Activated CD8-positive, alpha-beta T cell treated with anti-CD3 and anti-CD28 coated beads, Interleukin-2, amount 10 ng/mL, durations not matched to agents 7 days and 5 days (primary cell): ENCODE measurements at regions of chr7 and their contacts with region 1.

Region 1: GRCh38 chr7:56074371-56074791 is 10.3 kb downstream of the SUMF2 start:
- DNase-seq: peak; percentile 70
- ATAC-seq: peak; percentile 90
- H3K4me3 Mint-ChIP-seq: no peak overlapping the region
- H3K27ac Mint-ChIP-seq: peak overlapping the region; percentile 50
- H3K4me1 Mint-ChIP-seq: peaks cover 5% of the 10 kb centered on the region
- H3K27me3 Mint-ChIP-seq: no peaks in the 10 kb centered on the region

Region 2: DNA sequence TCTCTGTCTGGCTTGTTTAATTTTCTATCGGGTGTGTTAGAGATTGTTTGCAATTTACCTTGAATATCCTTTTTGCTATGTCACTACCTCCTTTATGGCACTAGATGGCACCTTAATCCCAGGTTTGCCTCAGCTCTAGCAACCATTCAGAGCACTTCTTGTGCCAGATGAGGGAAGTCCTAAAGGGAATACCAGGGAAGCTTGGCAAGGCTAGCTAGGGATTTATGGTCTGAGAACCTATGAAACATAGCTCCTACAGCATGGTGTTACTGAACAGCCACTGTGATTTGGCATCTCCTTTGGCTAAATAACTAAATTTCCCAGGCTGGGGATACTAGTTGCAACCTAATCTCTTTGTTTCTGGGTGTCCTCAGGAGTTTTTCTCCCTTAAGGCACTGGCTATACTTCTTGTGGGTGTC is 433.1 kb before region 1 on chr7:
- CTCF ChIA-PET with region 1: interaction called, 17 read pairs
- POLR2A ChIA-PET with region 1: no interaction called
- DNase-seq: peak; percentile 61
- ATAC-seq: peak; percentile 91
- H3K4me3 Mint-ChIP-seq: no peak overlapping the region
- H3K27ac Mint-ChIP-seq: peak overlapping the region; percentile 62
- H3K4me1 Mint-ChIP-seq: peaks cover 11% of the 10 kb centered on the region
- H3K27me3 Mint-ChIP-seq: peaks cover 2% of the 10 kb centered on the region

Region 3: DNA sequence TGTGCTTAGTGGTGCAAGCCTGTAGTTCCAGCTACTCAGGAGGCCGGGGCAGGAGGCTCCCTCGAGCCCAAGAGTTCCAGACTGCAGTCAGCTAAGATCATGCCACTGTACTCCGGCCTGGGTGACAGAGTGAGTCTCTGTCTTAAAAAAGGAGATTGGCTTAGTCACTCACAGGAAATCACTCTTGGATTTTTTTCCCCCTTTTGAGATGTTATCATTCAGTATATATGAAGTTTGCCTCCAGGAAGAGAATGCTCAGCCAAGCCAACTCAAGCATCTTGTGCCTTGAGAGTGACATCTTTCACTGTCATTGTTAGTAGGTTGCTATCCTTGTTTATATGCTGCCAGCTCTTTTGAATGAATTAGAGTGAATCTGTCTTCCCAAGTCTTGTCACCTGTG is 82.0 kb before region 1 on chr7:
- CTCF ChIA-PET with region 1: interaction called, 10 read pairs
- POLR2A ChIA-PET with region 1: no interaction called
- DNase-seq: no peak
- ATAC-seq: no peak
- H3K4me3 Mint-ChIP-seq: no peak overlapping the region
- H3K27ac Mint-ChIP-seq: no peak overlapping the region
- H3K4me1 Mint-ChIP-seq: no peaks in the 10 kb centered on the region
- H3K27me3 Mint-ChIP-seq: no peaks in the 10 kb centered on the region

Region 4: GRCh38 chr7:56003749-56004148 is 70.6 kb before region 1 on chr7:
- CTCF ChIA-PET with region 1: interaction called, 15 read pairs
- POLR2A ChIA-PET with region 1: no interaction called
- DNase-seq: no peak
- ATAC-seq: no peak
- H3K4me3 Mint-ChIP-seq: no peak overlapping the region
- H3K27ac Mint-ChIP-seq: no peak overlapping the region
- H3K4me1 Mint-ChIP-seq: peaks cover 3% of the 10 kb centered on the region
- H3K27me3 Mint-ChIP-seq: no peaks in the 10 kb centered on the region

Region 5: GRCh38 chr7:56051339-56052191 is 22.8 kb before region 1 on chr7 and contains the starts of genes CCT6A and PSPH:
- CTCF ChIA-PET with region 1: interaction called, 14 read pairs
- POLR2A ChIA-PET with region 1: no interaction called
- DNase-seq: peak; percentile 93
- ATAC-seq: peak; percentile 94
- H3K4me3 Mint-ChIP-seq: peak within 1 kb of the TSS; percentile 97
- H3K27ac Mint-ChIP-seq: peak within 1 kb of the TSS; percentile 94
- H3K4me1 Mint-ChIP-seq: peaks cover 46% of the 10 kb centered on the region
- H3K27me3 Mint-ChIP-seq: no peaks in the 10 kb centered on the region
- total RNA-seq, gene CCT6A: 157 to 170 TPM
- total RNA-seq, gene PSPH: 14.6 to 16.8 TPM

Region 6: GRCh38 chr7:56063882-56064625 is 10.3 kb before region 1 on chr7 and contains the start of gene SUMF2:
- CTCF ChIA-PET with region 1: interaction called, 26 read pairs
- POLR2A ChIA-PET with region 1: interaction called, 5 read pairs
- DNase-seq: peak; percentile 88
- ATAC-seq: peak; percentile 93
- H3K4me3 Mint-ChIP-seq: peak within 1 kb of the TSS; percentile 91
- H3K27ac Mint-ChIP-seq: peak within 1 kb of the TSS; percentile 95
- H3K4me1 Mint-ChIP-seq: peaks cover 38% of the 10 kb centered on the region
- H3K27me3 Mint-ChIP-seq: no peaks in the 10 kb centered on the region
- total RNA-seq, gene SUMF2: 121 to 124 TPM

Region 7: GRCh38 chr7:56125831-56126230 is 51.5 kb after region 1 on chr7:
- CTCF ChIA-PET with region 1: no interaction called
- POLR2A ChIA-PET with region 1: no interaction called
- DNase-seq: no peak
- ATAC-seq: no peak
- H3K4me3 Mint-ChIP-seq: no peak overlapping the region
- H3K27ac Mint-ChIP-seq: no peak overlapping the region
- H3K4me1 Mint-ChIP-seq: no peaks in the 10 kb centered on the region
- H3K27me3 Mint-ChIP-seq: no peaks in the 10 kb centered on the region